ENCODE measurements at regions of chr22 and their contacts with region 1.

Region 1: GRCh38 chr22:39003165-39003638 is 10.9 kb upstream of the APOBEC3C start:
- DNase-seq: peak; percentile 70
- H3K4me3 ChIP-seq: no peak overlapping the region
- H3K27ac ChIP-seq: no peak overlapping the region
- H3K4me1 ChIP-seq: peaks cover 4% of the 10 kb centered on the region
- H3K27me3 ChIP-seq: no peaks in the 10 kb centered on the region
- CTCF ChIP-seq: peak; percentile 60

Region 2: DNA sequence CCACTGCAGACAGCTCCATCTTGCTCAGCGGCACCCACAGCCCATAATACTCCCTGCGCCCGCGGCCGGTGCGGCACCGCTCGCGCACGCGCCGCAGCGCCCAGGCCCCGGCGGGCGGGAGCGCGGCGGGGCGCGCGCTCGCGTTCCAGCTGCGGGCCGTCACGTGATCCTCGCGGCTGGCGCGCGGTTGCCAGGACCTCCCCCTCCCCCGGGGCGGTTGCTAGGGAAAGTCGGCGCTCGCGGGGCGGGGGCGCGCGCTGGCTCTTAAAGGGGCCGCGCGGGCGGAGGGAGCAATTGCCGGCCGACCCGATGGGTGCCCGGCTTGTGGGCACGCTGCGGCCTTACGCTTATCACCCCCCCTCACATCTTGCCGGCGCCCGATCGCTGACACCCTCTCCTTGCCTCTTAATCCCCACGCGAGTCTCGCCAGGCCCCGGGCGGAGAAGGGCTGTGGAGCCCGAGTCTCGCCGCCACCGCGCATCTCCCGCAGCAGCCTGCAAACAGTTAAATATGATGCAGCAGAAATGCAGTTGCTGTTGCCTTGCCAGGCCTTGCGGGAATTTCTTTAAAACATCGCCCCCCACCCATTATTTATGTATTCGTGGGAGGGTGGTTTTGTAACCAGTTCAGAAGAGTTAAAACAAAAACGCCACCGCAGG is 130.9 kb before region 1 on chr22 and contains the start of gene CBX6:
- intact Hi-C with region 1: loop called (anchors 2 kb)
- DNase-seq: peak; percentile 92
- H3K4me3 ChIP-seq: peak within 1 kb of the TSS; percentile 57
- H3K27ac ChIP-seq: peak within 1 kb of the TSS; percentile 84
- H3K4me1 ChIP-seq: no peaks in the 10 kb centered on the region
- H3K27me3 ChIP-seq: peaks cover 16% of the 10 kb centered on the region
- CTCF ChIP-seq: no peak
- total RNA-seq, gene CBX6: 9.2 to 14.5 TPM

Region 3: GRCh38 chr22:38927033-38927781 is 76.0 kb before region 1 on chr22:
- intact Hi-C with region 1: loop called (anchors 5 kb)
- DNase-seq: peak; percentile 77
- H3K4me3 ChIP-seq: peak overlapping the region; percentile 29
- H3K27ac ChIP-seq: no peak overlapping the region
- H3K4me1 ChIP-seq: peaks cover 12% of the 10 kb centered on the region
- H3K27me3 ChIP-seq: no peaks in the 10 kb centered on the region
- CTCF ChIP-seq: peak; percentile 61

Region 4: GRCh38 chr22:39123751-39124601 is 120.8 kb after region 1 on chr22:
- intact Hi-C with region 1: loop called (anchors 5 kb)
- DNase-seq: no peak
- H3K4me3 ChIP-seq: no peak overlapping the region
- H3K27ac ChIP-seq: no peak overlapping the region
- H3K4me1 ChIP-seq: no peaks in the 10 kb centered on the region
- H3K27me3 ChIP-seq: no peaks in the 10 kb centered on the region
- CTCF ChIP-seq: no peak